T-cell (primary cell): ENCODE measurements at regions of chr13 and their contacts with region 1.

Region 1: GRCh38 chr13:49844181-49844580 is 51.7 kb upstream of the KPNA3 start:
- DNase-seq: no peak
- ATAC-seq: no peak
- H3K4me3 ChIP-seq: no peak overlapping the region
- H3K4me3 Mint-ChIP-seq: no peak overlapping the region
- H3K27ac ChIP-seq: no peak overlapping the region
- H3K27ac Mint-ChIP-seq: no peak overlapping the region
- H3K4me1 ChIP-seq: peaks cover 0 to 8% of the 10 kb centered on the region in 2 experiments
- H3K4me1 Mint-ChIP-seq: peaks cover 8 to 10% (median 8%) of the 10 kb centered on the region in 3 donors
- H3K27me3 ChIP-seq: peaks cover 0 to 17% of the 10 kb centered on the region in 2 experiments
- H3K27me3 Mint-ChIP-seq: peaks cover 5 to 6% of the 10 kb centered on the region in 2 donors

Region 2: GRCh38 chr13:49620170-49620621 is 224.0 kb before region 1 on chr13:
- CTCF ChIA-PET with region 1: interaction called in 1 of 2 experiments, 17 read pairs
- POLR2A ChIA-PET with region 1: no interaction called
- DNase-seq: peak in 3 of 35 experiments; percentile 7 to 14 (median 8)
- ATAC-seq: peak in 2 of 4 experiments; percentile 57 to 58
- H3K4me3 ChIP-seq: peak overlapping the region in 1 of 2 donors; percentile 29
- H3K4me3 Mint-ChIP-seq: peak overlapping the region in 2 of 3 donors; percentile 49 to 61
- H3K27ac ChIP-seq: no peak overlapping the region
- H3K27ac Mint-ChIP-seq: no peak overlapping the region
- H3K4me1 ChIP-seq: no peaks in the 10 kb centered on the region
- H3K4me1 Mint-ChIP-seq: peaks cover 0 to 4% (median 4%) of the 10 kb centered on the region in 3 donors
- H3K27me3 ChIP-seq: peaks cover 0 to 9% of the 10 kb centered on the region in 2 experiments
- H3K27me3 Mint-ChIP-seq: peaks cover 0 to 1% of the 10 kb centered on the region in 2 donors

Region 3: DNA sequence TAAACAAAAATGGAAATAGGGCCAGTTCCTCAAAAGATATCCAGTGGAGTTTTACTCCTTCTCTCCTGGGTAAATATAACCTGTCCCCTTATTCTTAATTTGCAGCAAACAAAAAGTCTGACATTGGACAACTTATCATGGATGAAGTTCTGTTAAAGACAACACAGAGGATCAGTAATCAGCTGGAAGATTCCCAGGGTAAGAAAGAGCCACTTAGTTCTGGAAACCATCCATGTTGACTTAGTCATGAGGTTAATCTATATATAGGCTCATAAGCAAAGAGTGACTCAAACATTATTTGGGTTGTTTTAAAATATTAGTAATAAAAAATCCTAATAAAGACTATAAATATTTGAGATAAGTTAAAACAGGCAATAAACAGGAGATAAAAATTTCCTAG is 112.4 kb before region 1 on chr13:
- CTCF ChIA-PET with region 1: no interaction called
- POLR2A ChIA-PET with region 1: no interaction called
- DNase-seq: no peak
- ATAC-seq: no peak
- H3K4me3 ChIP-seq: no peak overlapping the region
- H3K4me3 Mint-ChIP-seq: no peak overlapping the region
- H3K27ac ChIP-seq: no peak overlapping the region
- H3K27ac Mint-ChIP-seq: no peak overlapping the region
- H3K4me1 ChIP-seq: no peaks in the 10 kb centered on the region
- H3K4me1 Mint-ChIP-seq: peaks cover 0 to 10% (median 2%) of the 10 kb centered on the region in 3 donors
- H3K27me3 ChIP-seq: no peaks in the 10 kb centered on the region
- H3K27me3 Mint-ChIP-seq: no peaks in the 10 kb centered on the region

Region 4: DNA sequence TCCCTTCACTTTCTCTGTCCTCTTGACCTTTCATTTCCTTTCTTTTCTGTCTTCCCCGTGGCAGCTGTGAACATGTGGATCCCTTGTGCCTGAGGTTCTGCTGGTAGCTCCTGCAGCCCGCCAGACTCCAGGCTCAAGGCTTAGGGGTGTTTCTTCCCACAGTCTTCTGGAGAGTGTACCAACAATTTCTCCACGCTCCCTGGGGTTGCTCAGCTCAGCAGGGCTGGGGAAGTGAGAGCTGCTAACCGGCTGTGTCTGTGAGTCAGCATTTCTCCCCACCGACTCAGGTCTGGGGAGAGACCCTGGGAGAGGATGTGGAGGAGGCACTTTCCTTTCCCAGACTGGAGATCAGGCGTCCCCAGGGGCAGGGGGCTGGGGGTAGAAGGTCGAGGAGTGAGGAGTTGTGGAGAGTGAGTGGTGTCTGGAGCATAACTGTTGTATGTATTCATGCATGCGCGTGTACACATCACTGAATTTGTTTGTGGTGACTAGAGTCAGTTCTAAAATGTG is 364.7 kb after region 1 on chr13:
- CTCF ChIA-PET with region 1: no interaction called
- POLR2A ChIA-PET with region 1: no interaction called
- DNase-seq: peak in 1 of 35 experiments; percentile 30
- ATAC-seq: peak in 1 of 4 experiments; percentile 27
- H3K4me3 ChIP-seq: no peak overlapping the region
- H3K4me3 Mint-ChIP-seq: peak overlapping the region in 1 of 3 donors; percentile 44
- H3K27ac ChIP-seq: no peak overlapping the region
- H3K27ac Mint-ChIP-seq: no peak overlapping the region
- H3K4me1 ChIP-seq: peaks cover 0 to 3% of the 10 kb centered on the region in 2 experiments
- H3K4me1 Mint-ChIP-seq: peaks cover 6 to 16% (median 10%) of the 10 kb centered on the region in 3 donors
- H3K27me3 ChIP-seq: peaks cover 0 to 4% of the 10 kb centered on the region in 2 experiments
- H3K27me3 Mint-ChIP-seq: no peaks in the 10 kb centered on the region